ENCODE measurements at regions of chrX and their contacts with region 1.

Region 1: DNA sequence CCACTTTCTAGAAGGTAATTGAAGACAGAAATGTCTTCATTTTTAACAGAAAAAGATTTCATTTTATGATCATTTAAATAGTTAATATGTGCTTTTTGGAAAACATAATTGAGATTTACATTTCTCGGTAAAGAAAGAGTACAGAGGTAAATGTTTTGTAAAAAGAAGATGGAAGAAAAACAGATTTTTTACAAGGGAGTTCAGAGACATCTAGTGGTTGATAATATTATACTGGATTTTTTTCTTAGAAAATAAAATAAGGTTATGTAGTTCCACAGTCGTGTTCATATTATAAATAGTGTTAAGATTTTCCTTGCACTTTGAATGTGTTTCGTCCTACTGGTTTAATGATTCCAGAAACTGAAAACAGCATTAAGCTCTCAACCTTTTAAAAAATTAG is 60.6 kb downstream of the SMARCA1 start:
- DNase-seq: no peak

Region 2: DNA sequence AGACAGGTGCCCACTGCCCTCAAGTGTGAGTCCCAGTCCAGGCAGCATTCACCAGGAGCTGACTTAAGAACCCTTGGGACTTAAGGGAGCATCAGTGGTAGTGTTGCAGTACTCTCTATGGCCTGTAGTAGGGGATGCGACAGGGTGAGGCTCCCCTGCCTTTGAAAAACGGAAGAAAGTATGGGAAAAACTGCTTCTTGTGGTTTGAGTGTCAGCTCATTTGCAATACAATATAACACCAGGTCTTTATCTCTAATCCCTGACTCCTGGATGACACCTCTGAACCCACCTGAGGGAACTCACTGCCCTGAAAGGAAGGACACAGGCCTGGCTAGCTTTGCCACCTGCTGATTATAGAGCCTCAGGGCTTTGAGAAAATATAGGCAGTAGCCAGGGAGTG is 115.4 kb before region 1 on chrX:
- CTCF ChIA-PET with region 1: interaction called, 10 read pairs
- POLR2A ChIA-PET with region 1: no interaction called
- DNase-seq: no peak

Region 3: GRCh38 chrX:129445436-129445835 is 17.3 kb before region 1 on chrX:
- CTCF ChIA-PET with region 1: no interaction called
- POLR2A ChIA-PET with region 1: no interaction called
- DNase-seq: no peak

Region 4: GRCh38 chrX:129478516-129478915 is 15.8 kb after region 1 on chrX:
- CTCF ChIA-PET with region 1: no interaction called
- POLR2A ChIA-PET with region 1: no interaction called
- DNase-seq: no peak

Region 5: DNA sequence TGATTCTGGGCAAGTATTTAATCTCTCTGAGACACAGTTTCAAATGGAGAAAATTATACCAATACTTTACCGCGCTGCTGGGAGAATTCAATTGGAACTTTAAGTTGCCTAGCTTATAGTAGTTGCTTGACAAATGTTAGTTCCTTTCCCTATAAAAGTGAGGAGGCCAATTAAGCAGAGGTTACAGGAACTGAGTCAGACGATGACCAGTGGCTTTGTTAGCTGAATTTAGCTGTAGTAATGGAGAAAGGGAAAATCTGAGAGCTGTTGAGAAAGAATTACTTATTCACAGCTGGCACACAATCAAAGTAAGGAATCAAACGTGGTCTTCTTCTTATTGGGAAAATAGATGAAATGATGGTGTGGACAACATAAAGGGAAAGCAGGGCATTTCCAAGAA is 30.9 kb after region 1 on chrX:
- CTCF ChIA-PET with region 1: no interaction called
- POLR2A ChIA-PET with region 1: no interaction called
- DNase-seq: no peak

Measured in HEK293T (cell line).